ENCODE measurements at regions of chr17 and their contacts with region 1.

Region 1: DNA sequence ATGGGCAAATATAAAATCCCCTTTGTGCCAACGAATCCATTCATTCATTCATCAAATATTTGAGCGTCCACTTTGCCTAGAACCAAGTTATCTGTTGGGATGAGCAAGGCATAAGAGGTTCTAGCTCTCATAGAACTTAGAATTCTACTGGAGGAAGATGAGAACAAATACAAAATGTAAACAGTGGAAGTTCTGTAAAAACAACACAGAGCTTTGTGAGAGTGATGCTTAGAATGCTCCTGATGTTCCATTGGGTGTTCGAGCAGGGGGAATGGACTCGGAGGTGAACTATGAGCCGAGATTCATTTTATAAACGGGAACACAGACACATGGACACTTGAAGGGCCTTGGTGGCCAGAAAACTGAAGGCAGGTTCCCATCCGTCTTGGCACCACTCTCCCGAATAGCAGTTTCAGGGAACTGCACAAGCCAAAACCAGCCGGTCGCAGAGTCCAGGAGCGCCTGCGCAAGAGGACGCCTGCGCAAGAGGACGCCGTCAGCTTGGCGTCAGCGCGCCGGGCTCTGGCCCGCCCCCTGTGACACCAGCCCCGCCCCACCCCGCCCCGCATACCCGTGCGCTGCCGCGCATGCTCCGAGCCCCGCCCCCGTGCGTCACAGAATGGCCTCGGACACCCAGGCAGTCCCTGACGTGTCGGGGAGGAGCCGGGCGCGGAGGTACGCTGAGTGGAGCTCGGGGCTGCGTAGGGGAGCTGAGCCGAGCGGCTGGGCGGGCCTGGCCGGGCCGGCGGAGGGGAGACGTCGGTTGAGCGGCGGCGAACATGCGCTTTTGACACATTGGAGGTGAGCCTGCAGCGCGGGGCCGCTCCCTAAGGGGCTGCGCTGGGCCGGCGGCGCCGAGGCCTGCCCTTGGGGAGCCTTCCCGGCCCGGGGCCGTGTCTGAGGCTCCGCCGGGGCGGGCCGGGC is at the start of gene NDEL1:
- DNase-seq: peak; percentile 100
- ATAC-seq: peak; percentile 97
- H3K4me3 ChIP-seq: peak within 1 kb of the TSS; percentile 63 to 92
- H3K27ac ChIP-seq: peak within 1 kb of the TSS; percentile 94 to 99
- H3K4me1 ChIP-seq: peaks cover 0 to 3% of the 10 kb centered on the region in 2 donors
- H3K27me3 ChIP-seq: no peaks in the 10 kb centered on the region
- total RNA-seq, gene NDEL1: 110 to 135 TPM

Region 2: DNA sequence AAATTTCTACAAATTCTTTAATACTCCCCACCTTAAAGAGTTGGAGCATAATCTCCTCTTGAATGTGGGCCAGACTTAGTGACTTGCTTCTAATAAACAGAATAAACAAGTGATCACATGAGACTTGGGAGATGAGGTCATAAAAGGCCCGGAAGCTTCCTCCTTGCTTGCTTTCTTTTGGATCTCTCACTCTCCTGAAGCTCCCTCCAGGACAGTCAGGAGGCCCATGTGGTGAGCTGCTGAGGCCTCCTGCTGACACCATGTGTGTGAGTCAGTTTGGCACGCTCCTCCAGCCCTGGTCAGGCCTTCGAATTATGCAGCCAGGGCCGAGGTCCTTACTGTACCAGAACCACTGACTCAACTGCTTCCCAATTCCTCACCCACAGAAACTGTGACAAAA is 53.4 kb after region 1 on chr17:
- intact Hi-C with region 1: loop called in 1 of 2 experiments (anchors 10 kb)
- DNase-seq: peak; percentile 87 to 89
- ATAC-seq: peak; percentile 90
- H3K4me3 ChIP-seq: no peak overlapping the region
- H3K27ac ChIP-seq: no peak overlapping the region
- H3K4me1 ChIP-seq: no peaks in the 10 kb centered on the region
- H3K27me3 ChIP-seq: no peaks in the 10 kb centered on the region

Region 3: DNA sequence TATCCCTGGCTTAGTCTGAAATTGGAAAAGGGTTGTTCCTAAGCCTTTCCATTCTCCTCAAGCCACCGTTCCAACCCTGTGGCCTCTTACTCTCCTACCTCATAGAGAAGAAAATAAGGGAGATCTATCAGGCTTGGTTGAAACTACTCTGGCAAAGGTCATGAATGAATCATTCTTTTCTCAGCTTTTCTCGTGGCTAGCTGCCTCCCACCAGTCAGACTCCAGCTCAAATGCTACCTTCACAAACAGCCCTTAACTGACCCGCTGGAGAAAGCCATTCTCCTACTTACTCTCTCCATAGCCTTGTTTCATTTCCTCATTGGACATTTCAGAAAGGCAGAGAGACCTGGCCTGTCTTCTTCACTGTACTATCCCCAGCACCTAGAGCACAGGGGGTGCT is 186.1 kb after region 1 on chr17:
- intact Hi-C with region 1: loop called in 1 of 2 experiments (anchors 5 kb)
- DNase-seq: no peak
- ATAC-seq: peak; percentile 49
- H3K4me3 ChIP-seq: peak overlapping the region; percentile 46 to 84
- H3K27ac ChIP-seq: peak overlapping the region; percentile 34 to 49
- H3K4me1 ChIP-seq: peaks cover 1 to 6% of the 10 kb centered on the region in 2 donors
- H3K27me3 ChIP-seq: no peaks in the 10 kb centered on the region

Measured in aorta (tissue), 5 donors.